HEK293 (cell line): ENCODE measurements at regions of chr3 and their contacts with region 1.

Region 1: GRCh38 chr3:66938338-66938963 is 59.7 kb upstream of the KBTBD8 start:
- H3K4me3 ChIP-seq: no peak overlapping the region
- H3K27ac ChIP-seq: no peak overlapping the region
- H3K4me1 ChIP-seq: no peaks in the 10 kb centered on the region
- CTCF ChIP-seq: 0 out of 2 replicates have a peak, but pooled peaks have one; percentile 18

Region 2: DNA sequence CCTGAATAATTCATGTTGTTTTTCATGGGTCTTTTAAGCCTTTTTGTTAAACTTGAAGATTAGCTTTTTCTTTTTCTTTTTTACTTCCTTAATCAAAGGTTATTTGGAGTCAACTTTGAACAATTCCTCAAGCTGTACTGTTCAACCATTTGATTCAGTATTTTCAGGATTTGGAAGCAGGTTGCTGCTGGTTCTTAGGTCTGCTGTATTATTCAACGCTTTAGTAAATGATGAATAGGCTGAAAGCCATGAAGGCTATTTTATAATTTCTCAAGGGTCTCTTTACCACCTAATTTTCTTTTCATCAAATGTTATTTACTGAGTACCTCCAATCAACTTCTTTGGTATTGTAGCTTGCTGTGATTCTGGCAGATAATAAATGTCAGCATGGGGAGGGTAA is 13.9 kb after region 1 on chr3:
- CTCF ChIA-PET with region 1: interaction called, 11 read pairs
- POLR2A ChIA-PET with region 1: no interaction called
- H3K4me3 ChIP-seq: no peak overlapping the region
- H3K27ac ChIP-seq: no peak overlapping the region
- H3K4me1 ChIP-seq: no peaks in the 10 kb centered on the region
- CTCF ChIP-seq: no peak

Region 3: GRCh38 chr3:66983101-66983500 is 44.6 kb after region 1 on chr3:
- CTCF ChIA-PET with region 1: no interaction called
- POLR2A ChIA-PET with region 1: no interaction called
- H3K4me3 ChIP-seq: no peak overlapping the region
- H3K27ac ChIP-seq: no peak overlapping the region
- H3K4me1 ChIP-seq: no peaks in the 10 kb centered on the region
- CTCF ChIP-seq: no peak